AG04449 (cell line): ENCODE measurements at regions of chr22 and their contacts with region 1.

Region 1: DNA sequence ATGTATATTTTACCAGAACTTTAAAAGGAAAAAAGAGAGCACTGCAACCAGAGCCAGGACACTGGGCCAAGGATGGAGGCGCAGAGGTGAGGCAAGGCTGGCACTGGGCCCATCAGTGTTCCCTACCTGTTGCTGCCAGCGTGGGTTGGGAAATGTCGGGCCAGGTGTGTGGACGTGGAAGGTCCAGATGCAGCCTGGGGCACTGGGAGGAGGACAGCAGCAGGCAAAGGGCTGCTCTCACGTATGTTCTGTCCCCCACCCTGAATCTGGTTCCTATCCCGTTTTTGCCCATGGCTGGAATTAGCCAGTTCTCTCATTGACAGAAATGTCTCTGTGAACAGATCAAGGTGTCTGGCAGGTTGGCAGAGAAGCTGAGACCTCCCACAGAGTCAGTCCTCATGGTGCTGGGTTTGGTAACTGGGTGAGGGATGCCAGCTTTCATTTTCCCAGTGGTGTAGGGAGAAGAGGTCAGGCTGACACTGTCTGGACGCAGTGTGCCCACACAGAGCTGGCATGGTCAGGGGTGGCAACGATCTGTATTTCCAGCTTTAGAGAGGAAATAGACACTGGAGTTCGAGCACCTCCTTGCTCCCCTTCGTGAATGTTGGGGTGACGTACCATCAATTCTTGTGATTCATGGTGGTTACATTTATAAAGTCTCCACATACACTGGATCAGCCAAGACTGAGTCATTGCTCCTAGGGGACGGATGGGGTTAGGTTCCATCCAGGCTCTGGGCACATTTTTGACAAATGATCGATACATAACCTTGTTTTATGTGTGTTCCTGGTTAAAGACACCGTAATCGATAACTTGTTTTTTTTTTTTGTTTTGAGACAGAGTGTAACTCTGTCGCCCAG is 4.3 kb upstream of the PNPLA3 start:
- DNase-seq: no peak
- H3K4me3 ChIP-seq: no peak overlapping the region
- CTCF ChIP-seq: no peak

Region 2: DNA sequence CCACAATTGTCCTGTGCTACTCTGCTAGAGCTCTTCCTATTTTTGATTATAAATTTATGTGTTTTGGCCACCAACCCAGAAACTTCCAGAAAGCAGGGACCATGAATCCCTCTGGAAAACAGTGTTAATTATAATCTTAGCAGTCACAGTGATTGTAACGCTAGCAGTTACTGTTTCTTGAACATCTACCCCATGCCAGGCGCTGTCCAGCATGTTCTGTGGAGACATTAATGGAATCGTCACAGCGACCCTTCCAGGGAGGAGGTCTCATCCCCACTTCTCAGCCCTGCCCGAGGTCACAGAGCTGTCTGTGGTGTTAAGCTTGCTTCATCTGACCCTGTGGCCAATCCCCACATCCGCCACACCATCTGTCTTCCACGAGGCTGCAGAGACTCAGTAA is 13.7 kb before region 1 on chr22:
- CTCF ChIA-PET with region 1: interaction called, 11 read pairs
- POLR2A ChIA-PET with region 1: no interaction called
- DNase-seq: no peak
- H3K4me3 ChIP-seq: no peak overlapping the region
- CTCF ChIP-seq: no peak

Region 3: DNA sequence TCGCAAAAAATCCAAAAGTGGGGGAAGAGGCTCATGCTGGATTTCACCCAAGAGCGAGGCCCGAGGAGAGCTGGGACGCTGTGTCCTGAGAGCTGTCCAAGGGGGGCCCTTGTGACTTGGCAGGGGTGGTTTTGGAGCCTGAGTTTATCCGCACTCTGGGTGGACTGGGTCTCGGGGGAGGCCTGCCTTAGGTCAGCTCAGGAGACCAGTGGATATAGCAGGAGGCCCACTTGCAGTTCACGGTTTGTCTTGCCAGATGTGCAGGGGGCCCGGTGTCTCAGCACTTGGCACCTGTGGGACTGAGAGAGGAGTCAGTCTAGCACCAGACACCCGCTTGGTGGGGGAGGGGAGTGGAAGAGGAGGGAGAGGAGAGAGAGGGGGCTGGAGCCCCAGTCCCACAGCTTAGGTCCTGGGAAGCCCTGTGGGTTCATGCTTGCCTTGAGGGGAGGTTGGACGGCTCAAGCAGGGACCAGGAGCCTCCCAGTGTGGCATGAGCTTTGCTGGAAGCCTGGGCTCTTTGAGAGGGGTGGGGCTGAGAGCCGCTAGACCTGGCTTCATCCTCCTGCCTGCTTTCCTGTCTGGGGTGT is 138.2 kb after region 1 on chr22:
- CTCF ChIA-PET with region 1: no interaction called
- POLR2A ChIA-PET with region 1: no interaction called
- DNase-seq: no peak
- H3K4me3 ChIP-seq: no peak overlapping the region
- CTCF ChIP-seq: no peak